Caco-2 (cell line): ENCODE measurements at regions of chr19 and their contacts with region 1.

Region 1: DNA sequence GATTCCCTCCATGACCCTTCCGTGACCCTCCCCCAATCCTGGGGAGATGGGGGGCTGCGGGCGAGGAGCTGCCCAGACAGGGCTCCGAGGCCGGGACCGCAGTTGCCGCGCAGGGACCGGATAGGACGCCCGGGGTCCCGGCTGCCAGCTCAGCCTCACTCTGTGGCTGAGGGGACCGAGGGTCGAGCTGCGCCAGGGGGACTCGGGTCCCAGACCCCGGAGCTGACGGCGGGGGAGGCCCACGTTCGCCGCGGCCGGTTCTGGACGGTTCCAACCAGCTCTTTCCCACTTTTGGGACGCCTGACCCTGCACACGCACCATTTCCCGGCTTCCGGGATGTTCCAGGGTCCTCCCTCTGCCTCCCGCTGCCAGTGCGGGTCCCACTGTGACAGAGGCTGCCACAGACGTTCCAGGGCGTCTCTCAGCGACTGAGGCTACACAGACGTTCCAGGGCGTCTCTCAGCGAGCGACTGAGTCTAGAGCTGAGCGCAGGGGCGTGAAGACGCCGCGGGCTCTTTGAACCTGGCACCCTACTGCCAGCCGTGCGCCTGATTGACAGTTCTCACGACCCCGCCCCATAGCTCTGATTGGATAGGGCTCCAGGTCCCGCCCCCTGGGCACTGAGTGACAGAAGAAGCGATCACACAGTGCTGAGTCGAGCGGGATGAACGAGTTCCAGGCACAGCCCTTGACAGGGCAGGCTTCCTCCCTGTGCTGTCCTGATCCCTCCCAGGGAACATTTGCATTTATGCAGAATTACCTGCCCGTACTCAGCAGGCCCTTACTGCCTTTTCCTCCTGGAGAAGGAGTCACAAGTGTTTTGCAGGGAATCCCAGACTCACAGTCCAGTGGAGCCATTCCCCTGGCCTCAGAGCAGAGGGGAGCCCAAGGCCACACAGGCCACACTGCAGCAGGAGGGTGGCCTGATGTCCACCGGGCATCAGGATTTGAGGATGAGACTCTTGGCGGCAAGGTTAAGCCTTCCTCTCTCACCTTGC is at the start of gene ZNF563:
- DNase-seq: peak; percentile 95
- H3K4me3 ChIP-seq: peak within 1 kb of the TSS; percentile 87
- H3K4me3 Mint-ChIP-seq: peak within 1 kb of the TSS; percentile 92
- H3K27ac Mint-ChIP-seq: peak within 1 kb of the TSS; percentile 92
- H3K4me1 ChIP-seq: peaks cover 14% of the 10 kb centered on the region
- H3K4me1 Mint-ChIP-seq: peaks cover 9% of the 10 kb centered on the region
- H3K27me3 ChIP-seq: no peaks in the 10 kb centered on the region
- H3K27me3 Mint-ChIP-seq: no peaks in the 10 kb centered on the region
- CTCF ChIP-seq: no peak
- total RNA-seq, gene ZNF563: 3.0 and 3.4 TPM in 2 replicates

Region 2: DNA sequence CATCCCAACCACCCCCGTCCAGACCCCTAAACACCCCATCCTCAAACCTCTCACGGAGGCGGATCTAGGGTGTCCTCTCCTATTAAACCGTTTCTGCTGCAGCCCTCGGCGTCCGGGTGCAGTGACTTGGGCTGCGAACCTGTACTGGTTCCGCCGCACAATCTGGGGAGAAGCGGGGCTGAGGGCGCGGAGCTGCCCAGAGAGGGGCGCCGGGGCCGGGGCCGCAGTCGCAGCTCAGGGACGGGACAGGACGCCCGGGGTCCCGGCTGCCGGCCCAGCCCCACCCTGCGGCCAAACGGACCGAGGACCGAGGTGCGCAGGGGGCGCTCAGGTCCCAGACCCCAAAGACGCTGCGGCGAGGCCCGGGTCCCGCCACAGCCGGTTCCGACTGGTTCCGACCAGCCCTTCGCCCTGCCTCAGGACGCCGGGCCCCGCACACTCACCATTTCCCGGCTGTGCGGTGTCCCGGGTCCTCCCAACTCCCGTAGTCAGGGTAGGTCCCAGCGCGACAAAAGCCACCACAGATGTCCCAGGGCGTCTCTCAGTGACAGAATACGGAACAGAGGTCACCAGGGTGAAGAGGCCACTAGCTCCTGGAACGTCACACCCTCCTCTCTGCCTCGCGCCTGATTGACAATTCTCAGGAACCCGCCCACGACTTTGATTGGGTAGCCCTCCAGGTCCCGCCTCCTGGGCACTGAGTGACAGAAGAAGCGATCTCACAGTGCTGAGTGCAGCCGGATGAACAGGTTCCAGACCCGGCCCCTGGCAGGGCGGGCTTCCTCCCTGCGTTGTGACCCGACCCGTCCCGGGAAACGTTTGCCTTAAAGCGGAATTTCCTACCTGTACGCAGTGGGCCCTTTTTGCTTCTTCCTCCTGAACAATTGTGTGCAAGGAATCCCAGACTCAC is 39.0 kb before region 1 on chr19 and contains the start of gene ZNF44:
- CTCF ChIA-PET with region 1: no interaction called
- POLR2A ChIA-PET with region 1: interaction called, 7 read pairs
- intact Hi-C with region 1: loop called (anchors 2 kb)
- DNase-seq: peak; percentile 96 to 98
- H3K4me3 ChIP-seq: peak within 1 kb of the TSS; percentile 69
- H3K4me3 Mint-ChIP-seq: peak within 1 kb of the TSS; percentile 97
- H3K27ac Mint-ChIP-seq: peak within 1 kb of the TSS; percentile 98
- H3K4me1 ChIP-seq: peaks cover 5% of the 10 kb centered on the region; the same call in 1 of the 2 replicates
- H3K4me1 Mint-ChIP-seq: no peaks in the 10 kb centered on the region
- H3K27me3 ChIP-seq: no peaks in the 10 kb centered on the region
- H3K27me3 Mint-ChIP-seq: no peaks in the 10 kb centered on the region
- CTCF ChIP-seq: no peak
- total RNA-seq, gene ZNF44: 6.7 and 8.0 TPM in 2 replicates